A673 (cell line): ENCODE measurements at regions of chr2 and their contacts with region 1.

Region 1: GRCh38 chr2:190781604-190782198 is 98.9 kb upstream of the GLS start:
- DNase-seq: peak; percentile 75
- H3K4me3 ChIP-seq: no peak overlapping the region
- H3K27ac ChIP-seq: no peak overlapping the region
- H3K4me1 ChIP-seq: no peaks in the 10 kb centered on the region
- H3K27me3 ChIP-seq: no peaks in the 10 kb centered on the region
- CTCF ChIP-seq: peak; percentile 70

Region 2: GRCh38 chr2:190880378-190881073 is 98.8 kb after region 1 on chr2 and contains the start of gene GLS:
- CTCF ChIA-PET with region 1: no interaction called
- POLR2A ChIA-PET with region 1: no interaction called
- intact Hi-C with region 1: loop called (anchors 5 kb)
- DNase-seq: peak; percentile 99
- H3K4me3 ChIP-seq: peak within 1 kb of the TSS; percentile 90
- H3K27ac ChIP-seq: peak within 1 kb of the TSS; percentile 85
- H3K4me1 ChIP-seq: peaks cover 32% of the 10 kb centered on the region
- H3K27me3 ChIP-seq: no peaks in the 10 kb centered on the region
- CTCF ChIP-seq: no peak
- total RNA-seq, gene GLS: 99.5 and 116 TPM in 2 replicates

Region 3: DNA sequence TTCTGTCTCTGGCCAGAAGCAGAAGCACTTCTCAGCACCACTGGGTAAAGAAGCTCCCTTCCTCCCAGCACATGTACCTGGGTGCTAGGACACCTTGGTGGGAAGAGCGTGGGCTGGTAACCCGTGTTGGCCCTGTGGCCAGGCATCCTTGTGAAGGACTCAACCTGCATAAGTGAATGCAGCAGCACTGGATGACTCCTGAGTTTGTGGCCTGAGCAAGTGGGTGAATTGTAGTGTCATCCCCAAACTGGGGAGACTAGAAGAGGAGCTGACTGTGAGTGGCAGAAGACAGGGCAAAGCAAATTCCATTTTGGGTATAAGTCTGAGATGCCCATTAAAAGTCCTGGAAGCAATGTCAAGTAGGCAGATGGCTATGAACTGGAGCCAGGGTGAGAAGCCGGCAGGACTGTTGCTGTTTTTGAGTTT is 168.9 kb after region 1 on chr2:
- CTCF ChIA-PET with region 1: no interaction called
- POLR2A ChIA-PET with region 1: no interaction called
- intact Hi-C with region 1: loop called (anchors 5 kb)
- DNase-seq: no peak
- H3K4me3 ChIP-seq: no peak overlapping the region
- H3K27ac ChIP-seq: no peak overlapping the region
- H3K4me1 ChIP-seq: peaks cover 11% of the 10 kb centered on the region
- H3K27me3 ChIP-seq: no peaks in the 10 kb centered on the region
- CTCF ChIP-seq: no peak

Region 4: DNA sequence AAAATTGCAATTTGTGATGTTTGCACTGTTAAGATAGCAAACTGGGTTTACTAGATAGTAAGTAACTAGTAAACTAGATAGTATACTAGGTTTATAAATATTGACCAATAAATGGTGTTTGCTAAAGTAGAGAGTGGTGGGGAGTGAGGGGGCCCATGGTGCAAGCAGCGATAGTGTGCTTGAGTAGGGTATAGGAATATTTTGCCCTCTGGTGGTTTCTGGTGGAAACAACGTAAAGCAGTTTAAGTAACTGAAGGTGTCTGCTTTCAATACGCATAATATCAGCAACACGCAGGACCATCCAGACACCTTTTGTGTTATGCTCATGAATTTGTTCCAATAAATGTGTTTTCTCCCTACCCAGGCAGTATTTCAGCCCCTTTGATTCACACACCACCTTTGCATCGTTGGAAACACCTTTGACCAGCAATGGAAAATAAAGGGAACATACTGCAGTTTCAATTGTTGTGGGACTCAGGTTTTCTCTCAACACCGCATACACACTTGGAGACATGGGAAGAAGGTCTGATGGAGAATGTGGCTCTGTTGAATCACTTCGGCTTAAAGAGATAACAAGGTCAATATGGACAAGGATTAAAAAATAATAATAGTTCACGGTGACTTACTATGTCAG is 248.9 kb after region 1 on chr2:
- CTCF ChIA-PET with region 1: no interaction called
- POLR2A ChIA-PET with region 1: no interaction called
- intact Hi-C with region 1: loop called (anchors 1 kb)
- DNase-seq: peak; percentile 64
- H3K4me3 ChIP-seq: no peak overlapping the region
- H3K27ac ChIP-seq: no peak overlapping the region
- H3K4me1 ChIP-seq: no peaks in the 10 kb centered on the region
- H3K27me3 ChIP-seq: no peaks in the 10 kb centered on the region
- CTCF ChIP-seq: peak; percentile 75

Region 5: DNA sequence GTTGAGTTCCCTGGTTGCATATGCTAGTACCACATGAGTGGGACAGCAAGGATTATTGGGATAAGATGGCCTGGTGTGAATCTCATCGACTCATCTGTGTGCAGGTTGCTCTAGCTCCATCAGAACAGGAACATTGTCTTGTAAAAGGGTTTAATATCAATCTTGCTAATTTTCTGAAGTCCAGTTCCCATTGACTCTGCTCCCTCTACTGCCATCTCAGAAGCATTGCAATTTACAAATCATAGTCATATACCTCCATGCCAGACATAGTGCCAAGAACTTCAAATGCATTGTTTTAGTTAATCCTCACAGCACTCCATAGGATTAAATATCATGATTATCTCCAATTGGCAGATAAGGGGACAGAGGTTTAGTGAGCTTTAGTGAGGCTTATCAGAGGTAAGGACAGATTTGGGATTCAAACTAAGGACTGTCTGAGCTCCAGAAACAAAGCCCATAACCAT is 373.9 kb after region 1 on chr2:
- CTCF ChIA-PET with region 1: no interaction called
- POLR2A ChIA-PET with region 1: no interaction called
- intact Hi-C with region 1: loop called (anchors 2 kb)
- DNase-seq: peak; percentile 60
- H3K4me3 ChIP-seq: no peak overlapping the region
- H3K27ac ChIP-seq: no peak overlapping the region
- H3K4me1 ChIP-seq: peaks cover 15% of the 10 kb centered on the region
- H3K27me3 ChIP-seq: no peaks in the 10 kb centered on the region
- CTCF ChIP-seq: peak; percentile 73